HEK293 (cell line): ENCODE measurements at regions of chr6 and their contacts with region 1.

Region 1: DNA sequence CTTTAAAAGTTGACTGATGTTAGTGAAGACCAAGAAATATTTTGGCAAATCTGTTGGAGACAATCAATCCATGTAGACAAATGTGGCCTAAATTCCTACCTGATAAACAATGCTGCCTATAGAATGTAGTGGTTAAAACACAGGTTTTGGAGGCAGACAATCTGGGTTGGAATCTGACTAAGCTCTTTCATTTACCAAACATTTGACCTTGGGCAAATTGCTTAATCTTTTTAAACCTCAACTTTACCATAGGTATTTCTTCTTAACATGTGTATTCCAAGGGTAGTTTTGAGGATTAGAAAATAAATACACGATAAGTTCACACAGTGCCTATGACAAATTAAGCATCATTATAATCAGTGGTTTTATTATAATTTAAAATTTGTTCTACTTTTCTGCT is 11.5 kb downstream of the RHAG start:
- H3K4me3 ChIP-seq: no peak overlapping the region
- H3K27ac ChIP-seq: no peak overlapping the region
- H3K4me1 ChIP-seq: no peaks in the 10 kb centered on the region
- CTCF ChIP-seq: no peak

Region 2: DNA sequence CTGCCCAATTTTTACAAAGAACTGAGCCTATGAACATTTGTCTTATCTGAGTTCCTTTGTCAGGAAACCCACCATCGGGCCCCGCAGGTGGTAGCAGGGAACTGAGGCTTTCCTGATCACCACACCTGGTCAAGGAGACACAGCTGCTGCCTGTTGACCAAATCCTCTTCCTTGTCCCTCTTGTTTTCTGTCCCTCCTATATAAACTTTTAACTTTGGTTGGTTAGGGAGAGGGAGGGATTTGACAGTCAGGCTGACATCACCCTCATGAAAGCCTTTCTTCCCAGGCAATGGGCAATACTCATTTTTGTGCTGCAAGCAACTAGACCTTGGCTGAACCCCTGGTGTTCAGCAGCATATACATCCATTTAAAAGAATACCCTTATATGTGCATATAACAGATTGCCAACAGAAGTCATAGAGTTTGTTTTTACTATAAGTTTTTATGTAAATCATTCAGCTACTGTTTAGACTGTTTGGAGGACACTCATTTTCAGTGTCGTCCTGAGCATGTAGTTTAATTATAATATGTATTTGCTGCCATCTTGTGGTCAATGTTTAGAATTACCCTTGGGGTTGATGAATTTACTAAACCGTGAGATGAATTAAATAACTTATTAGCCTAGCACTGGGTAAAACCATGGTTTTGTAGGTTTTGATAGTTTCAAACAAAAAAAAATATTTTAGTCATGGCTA is 224.2 kb after region 1 on chr6:
- CTCF ChIA-PET with region 1: interaction called, 66 read pairs
- POLR2A ChIA-PET with region 1: no interaction called
- H3K4me3 ChIP-seq: no peak overlapping the region
- H3K27ac ChIP-seq: no peak overlapping the region
- H3K4me1 ChIP-seq: no peaks in the 10 kb centered on the region
- CTCF ChIP-seq: no peak

Region 3: GRCh38 chr6:50062051-50062450 is 436.9 kb after region 1 on chr6:
- CTCF ChIA-PET with region 1: no interaction called
- POLR2A ChIA-PET with region 1: no interaction called
- H3K4me3 ChIP-seq: no peak overlapping the region
- H3K27ac ChIP-seq: no peak overlapping the region
- H3K4me1 ChIP-seq: no peaks in the 10 kb centered on the region
- CTCF ChIP-seq: no peak